ENCODE measurements at regions of chr17 and their contacts with region 1.

Region 1: DNA sequence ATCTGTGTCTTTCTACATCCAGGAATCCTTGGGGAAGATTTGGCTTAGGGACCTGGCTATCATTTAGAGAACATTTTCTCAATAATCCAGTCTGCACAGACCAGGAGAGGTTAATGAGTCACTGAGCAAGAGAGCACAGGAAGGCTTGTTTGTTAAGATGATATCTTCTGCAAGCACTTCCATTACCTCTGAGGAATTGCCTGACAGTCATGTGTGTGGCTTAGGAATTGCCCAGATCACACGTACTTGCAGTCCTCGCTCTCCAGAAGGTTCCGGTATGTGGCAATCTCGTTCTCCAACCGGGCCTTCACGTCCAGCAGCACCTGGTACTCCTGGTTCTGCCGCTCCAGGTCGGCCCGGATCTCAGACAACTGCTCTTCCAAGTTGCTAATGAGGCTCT is 3.3 kb downstream of the KRT37 start:
- DNase-seq: peak; percentile 68
- H3K4me3 Mint-ChIP-seq: no peak overlapping the region
- H3K27ac Mint-ChIP-seq: peak overlapping the region; percentile 46
- H3K4me1 Mint-ChIP-seq: peaks cover 32% of the 10 kb centered on the region
- H3K27me3 Mint-ChIP-seq: no peaks in the 10 kb centered on the region
- CTCF ChIP-seq: no peak

Region 2: DNA sequence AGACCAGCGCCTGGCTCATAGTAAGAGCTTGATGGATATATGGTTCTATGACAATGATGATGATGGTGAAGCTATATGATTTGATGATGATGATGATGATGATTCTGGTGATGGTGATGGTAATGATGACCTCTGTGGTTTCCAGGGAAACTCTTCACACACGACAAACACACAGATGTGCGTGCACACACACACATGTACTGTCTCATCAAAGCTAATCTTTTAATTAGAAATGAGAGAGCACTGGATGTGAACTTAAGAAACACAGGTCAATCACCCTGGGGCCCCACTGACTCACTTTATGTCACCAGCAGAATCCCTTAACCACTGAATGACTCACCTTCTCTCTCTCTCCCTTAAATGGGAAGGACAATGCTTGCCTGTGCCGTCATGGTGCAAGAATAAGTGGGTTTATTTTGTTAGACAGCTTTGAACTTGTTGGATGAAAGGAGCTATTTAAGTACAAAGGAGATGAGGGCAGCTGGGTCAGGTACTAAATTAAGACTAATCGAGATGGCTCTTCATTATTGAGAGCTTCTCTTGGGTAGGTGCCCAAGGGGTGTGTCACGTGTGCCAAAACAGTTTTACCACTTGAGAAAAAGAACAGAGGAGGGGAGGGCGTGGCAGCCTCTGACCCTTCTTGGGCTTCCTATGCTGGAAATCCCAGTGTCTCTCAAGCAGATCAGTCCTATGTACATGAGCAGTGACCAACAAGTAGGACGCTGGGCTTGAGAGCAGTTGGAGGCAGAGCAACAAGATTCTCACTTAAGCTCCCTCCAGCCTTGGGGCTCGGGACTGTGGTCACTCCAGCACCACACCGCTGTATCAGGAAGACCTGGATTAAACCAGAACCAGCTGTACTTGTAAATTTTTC is 17.1 kb before region 1 on chr17:
- CTCF ChIA-PET with region 1: interaction called, 3 read pairs
- POLR2A ChIA-PET with region 1: interaction called, 13 read pairs
- intact Hi-C with region 1: no loop called
- DNase-seq: peak; percentile 99
- H3K4me3 Mint-ChIP-seq: peak overlapping the region; percentile 3
- H3K27ac Mint-ChIP-seq: peak overlapping the region; percentile 35
- H3K4me1 Mint-ChIP-seq: peaks cover 13% of the 10 kb centered on the region
- H3K27me3 Mint-ChIP-seq: peaks cover 54% of the 10 kb centered on the region
- CTCF ChIP-seq: no peak

Region 3: GRCh38 chr17:41442739-41443138 is 21.6 kb after region 1 on chr17:
- CTCF ChIA-PET with region 1: no interaction called
- POLR2A ChIA-PET with region 1: no interaction called
- intact Hi-C with region 1: no loop called
- DNase-seq: peak; percentile 38
- H3K4me3 Mint-ChIP-seq: no peak overlapping the region
- H3K27ac Mint-ChIP-seq: no peak overlapping the region
- H3K4me1 Mint-ChIP-seq: peaks cover 6% of the 10 kb centered on the region
- H3K27me3 Mint-ChIP-seq: peaks cover 57% of the 10 kb centered on the region
- CTCF ChIP-seq: no peak

Measured in MCF 10A (cell line).